Psoas muscle (tissue), 8 donors: ENCODE measurements at regions of chr2 and their contacts with region 1.

Region 1: DNA sequence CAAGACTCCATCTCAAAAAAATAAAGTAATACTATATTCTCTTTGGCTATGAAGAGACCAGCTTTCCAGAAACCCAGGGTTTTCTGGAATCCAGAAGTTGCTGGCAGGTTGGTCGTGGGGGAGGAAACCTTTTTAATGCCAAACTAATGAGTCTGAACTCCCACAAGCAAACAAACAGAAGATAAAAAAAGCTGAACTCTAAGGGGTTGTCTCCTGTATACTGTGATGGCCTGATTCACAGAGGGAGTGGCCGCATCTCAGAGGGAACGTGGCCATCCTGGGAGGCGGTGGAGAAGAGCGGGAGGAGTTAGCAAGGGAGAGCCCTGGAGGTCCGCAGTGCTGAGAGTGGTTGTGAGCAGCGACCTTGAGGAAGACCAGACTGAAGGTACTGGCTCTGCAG is 36.1 kb downstream of the LIMS1 start:
- DNase-seq: no peak
- ATAC-seq: peak in 2 of 4 donors; percentile 16 to 24
- H3K4me3 ChIP-seq: no peak overlapping the region
- H3K27ac ChIP-seq: peak overlapping the region; percentile 46
- H3K4me1 ChIP-seq: peaks cover 42% of the 10 kb centered on the region
- H3K27me3 ChIP-seq: no peaks in the 10 kb centered on the region
- CTCF ChIP-seq: no peak

Region 2: DNA sequence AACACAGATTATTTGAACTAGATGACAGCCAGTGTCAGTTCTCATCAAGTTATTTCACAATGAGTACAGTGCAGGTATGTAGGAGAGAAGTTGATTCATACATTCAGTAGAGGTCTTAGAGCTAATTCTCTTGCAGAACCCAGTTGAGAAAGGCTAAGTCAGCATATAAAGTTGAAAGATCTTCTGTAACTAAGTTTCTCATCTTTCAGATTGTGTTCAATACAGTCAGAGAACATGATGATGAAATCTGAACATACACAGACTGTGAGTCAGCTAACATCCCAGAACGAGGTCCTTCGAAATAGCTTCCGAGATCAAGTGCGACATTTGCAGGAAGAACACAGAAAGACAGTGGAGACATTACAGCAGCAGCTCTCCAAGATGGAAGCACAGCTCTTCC is 78.1 kb before region 1 on chr2:
- intact Hi-C with region 1: no loop called
- DNase-seq: no peak
- ATAC-seq: peak; percentile 67 to 97 (median 88)
- H3K4me3 ChIP-seq: no peak overlapping the region
- H3K27ac ChIP-seq: no peak overlapping the region
- H3K4me1 ChIP-seq: no peaks in the 10 kb centered on the region
- H3K27me3 ChIP-seq: no peaks in the 10 kb centered on the region
- CTCF ChIP-seq: no peak

Region 3: GRCh38 chr2:108533832-108534583 is 36.4 kb before region 1 on chr2 and contains the start of gene LIMS1:
- intact Hi-C with region 1: loop called in 1 of 2 experiments (anchors 5 kb)
- DNase-seq: peak; percentile 94 to 96
- ATAC-seq: peak; percentile 94 to 96 (median 95)
- H3K4me3 ChIP-seq: peak within 1 kb of the TSS; percentile 82
- H3K27ac ChIP-seq: peak within 1 kb of the TSS; percentile 96
- H3K4me1 ChIP-seq: peaks cover 21% of the 10 kb centered on the region
- H3K27me3 ChIP-seq: no peaks in the 10 kb centered on the region
- CTCF ChIP-seq: no peak
- total RNA-seq, gene LIMS1: 55.1 to 219 (median 182) TPM

Region 4: GRCh38 chr2:109396202-109397180 is 826.1 kb after region 1 on chr2:
- intact Hi-C with region 1: no loop called
- DNase-seq: no peak
- ATAC-seq: no peak
- H3K4me3 ChIP-seq: no peak overlapping the region
- H3K27ac ChIP-seq: no peak overlapping the region
- H3K4me1 ChIP-seq: peaks cover 3% of the 10 kb centered on the region
- H3K27me3 ChIP-seq: no peaks in the 10 kb centered on the region
- CTCF ChIP-seq: no peak